ENCODE measurements at regions of chr3 and their contacts with region 1.

Region 1: DNA sequence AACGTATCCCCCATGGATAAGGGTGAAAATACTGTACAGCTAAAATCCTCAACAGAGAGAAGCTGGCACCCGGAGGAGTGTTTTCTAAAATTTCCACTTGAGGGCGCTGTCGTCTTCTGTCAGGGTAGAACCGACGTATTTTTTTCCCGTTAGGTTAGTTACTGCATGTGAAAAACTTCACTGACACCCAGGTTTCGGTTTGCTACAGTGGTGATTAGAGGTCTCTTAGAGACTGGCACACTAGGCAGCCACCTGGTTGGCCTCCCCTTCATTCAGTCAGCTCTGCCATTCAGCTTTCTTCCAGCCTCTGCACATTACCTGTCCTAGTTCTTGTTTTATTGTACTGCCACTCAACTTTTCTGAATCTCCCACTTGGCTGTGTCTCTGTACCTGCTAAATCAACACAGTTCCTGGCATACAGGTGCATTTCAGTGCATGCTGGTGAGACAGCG is 18.4 kb downstream of the CCK start:
- DNase-seq: peak; percentile 58
- H3K4me3 ChIP-seq: peak overlapping the region in 1 of 2 experiments; percentile 39; a peak in 1 of 4 replicates
- H3K27ac ChIP-seq: no peak overlapping the region
- H3K4me1 ChIP-seq: no peaks in the 10 kb centered on the region; a peak in 1 of 4 replicates
- H3K27me3 ChIP-seq: peaks cover 16% of the 10 kb centered on the region; the same call in 1 of the 2 replicates
- CTCF ChIP-seq: peak; percentile 76
- EP300 ChIP-seq: no peak
- RAD21 ChIP-seq: peak; percentile 90

Region 2: GRCh38 chr3:42229942-42230688 is 17.5 kb before region 1 on chr3:
- CTCF ChIA-PET with region 1: interaction called, 31 read pairs
- POLR2A ChIA-PET with region 1: no interaction called
- DNase-seq: peak; percentile 67
- H3K4me3 ChIP-seq: no peak overlapping the region; a peak in 1 of 4 replicates
- H3K27ac ChIP-seq: no peak overlapping the region
- H3K4me1 ChIP-seq: no peaks in the 10 kb centered on the region; a peak in 1 of 4 replicates
- H3K27me3 ChIP-seq: no peaks in the 10 kb centered on the region
- CTCF ChIP-seq: peak; percentile 72
- EP300 ChIP-seq: no peak
- RAD21 ChIP-seq: peak; percentile 77

Region 3: GRCh38 chr3:42264399-42265058 is 16.9 kb after region 1 on chr3:
- CTCF ChIA-PET with region 1: interaction called, 103 read pairs
- POLR2A ChIA-PET with region 1: no interaction called
- DNase-seq: peak; percentile 67
- H3K4me3 ChIP-seq: no peak overlapping the region; a peak in 1 of 4 replicates
- H3K27ac ChIP-seq: no peak overlapping the region
- H3K4me1 ChIP-seq: peaks cover 0 to 8% of the 10 kb centered on the region in 2 experiments; a peak in 1 of 4 replicates
- H3K27me3 ChIP-seq: peaks cover 59% of the 10 kb centered on the region
- CTCF ChIP-seq: no peak
- EP300 ChIP-seq: no peak
- RAD21 ChIP-seq: no peak

Region 4: GRCh38 chr3:42434777-42435380 is 187.3 kb after region 1 on chr3:
- CTCF ChIA-PET with region 1: interaction called, 169 read pairs
- POLR2A ChIA-PET with region 1: no interaction called
- DNase-seq: no peak
- H3K4me3 ChIP-seq: no peak overlapping the region
- H3K27ac ChIP-seq: no peak overlapping the region
- H3K4me1 ChIP-seq: peaks cover 0 to 5% of the 10 kb centered on the region in 2 experiments; a peak in 1 of 4 replicates
- H3K27me3 ChIP-seq: no peaks in the 10 kb centered on the region
- CTCF ChIP-seq: no peak
- EP300 ChIP-seq: no peak
- RAD21 ChIP-seq: no peak

Region 5: DNA sequence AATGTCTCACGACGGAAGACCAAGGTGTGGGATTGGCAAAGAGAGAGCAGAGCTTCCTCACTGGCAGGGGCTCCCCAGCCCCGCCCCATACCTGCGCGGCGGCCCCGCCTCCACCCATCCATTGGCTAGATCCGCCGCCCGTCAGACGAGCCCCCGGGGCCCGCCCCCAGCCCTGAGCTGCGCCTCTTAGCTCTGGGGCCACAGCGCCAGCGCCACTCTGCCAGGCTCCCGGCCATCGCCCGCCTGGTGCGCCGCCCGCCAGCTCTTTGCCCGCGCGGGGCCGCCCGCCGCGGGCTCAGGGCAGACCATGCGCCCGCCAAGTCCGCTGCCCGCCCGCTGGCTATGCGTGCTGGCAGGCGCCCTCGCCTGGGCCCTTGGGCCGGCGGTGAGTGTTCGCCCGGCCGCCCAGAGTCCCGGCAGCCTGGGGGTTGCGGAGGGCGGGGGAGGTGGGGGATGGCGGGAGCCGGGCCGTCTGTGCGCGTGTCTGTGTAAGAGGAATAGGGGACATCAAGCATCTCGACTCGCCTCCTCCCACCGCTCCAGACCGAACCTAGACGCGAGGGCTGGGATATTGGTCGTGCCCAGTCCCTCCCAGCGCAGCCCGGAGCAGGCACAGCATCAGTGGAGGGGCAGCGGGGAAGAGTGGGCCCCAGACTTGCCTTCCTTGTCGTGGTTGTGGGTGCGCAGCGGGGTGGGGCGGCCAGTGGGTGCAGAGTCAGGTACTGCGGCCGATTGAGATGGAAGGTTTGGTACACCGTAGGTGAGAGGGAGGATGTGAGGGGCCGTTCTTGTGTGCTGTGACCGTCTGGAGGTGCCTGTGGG is 255.0 kb after region 1 on chr3 and contains the start of gene VIPR1:
- CTCF ChIA-PET with region 1: interaction called, 11 read pairs
- POLR2A ChIA-PET with region 1: no interaction called
- DNase-seq: peak; percentile 92
- H3K4me3 ChIP-seq: peak within 1 kb of the TSS; percentile 32 to 36
- H3K27ac ChIP-seq: no peak within 1 kb of the TSS
- H3K4me1 ChIP-seq: peaks cover 0 to 13% of the 10 kb centered on the region in 2 experiments; a peak in 1 of 4 replicates
- H3K27me3 ChIP-seq: peaks cover 38% of the 10 kb centered on the region
- CTCF ChIP-seq: no peak
- EP300 ChIP-seq: no peak
- RAD21 ChIP-seq: no peak
- polyA plus RNA-seq, gene VIPR1: not detected in 2 replicates

Region 6: GRCh38 chr3:42547401-42547945 is 299.9 kb after region 1 on chr3:
- CTCF ChIA-PET with region 1: interaction called, 60 read pairs
- POLR2A ChIA-PET with region 1: no interaction called
- DNase-seq: peak; percentile 76
- H3K4me3 ChIP-seq: peak overlapping the region in 1 of 2 experiments; percentile 48; a peak in 1 of 4 replicates
- H3K27ac ChIP-seq: no peak overlapping the region
- H3K4me1 ChIP-seq: peaks cover 0 to 14% of the 10 kb centered on the region in 2 experiments; a peak in 1 of 4 replicates
- H3K27me3 ChIP-seq: no peaks in the 10 kb centered on the region
- CTCF ChIP-seq: peak; percentile 98
- EP300 ChIP-seq: no peak
- RAD21 ChIP-seq: peak; percentile 55

Measured in SK-N-SH (cell line).